CD14-positive monocyte (primary cell): ENCODE measurements at regions of chr5 and their contacts with region 1.

Region 1: DNA sequence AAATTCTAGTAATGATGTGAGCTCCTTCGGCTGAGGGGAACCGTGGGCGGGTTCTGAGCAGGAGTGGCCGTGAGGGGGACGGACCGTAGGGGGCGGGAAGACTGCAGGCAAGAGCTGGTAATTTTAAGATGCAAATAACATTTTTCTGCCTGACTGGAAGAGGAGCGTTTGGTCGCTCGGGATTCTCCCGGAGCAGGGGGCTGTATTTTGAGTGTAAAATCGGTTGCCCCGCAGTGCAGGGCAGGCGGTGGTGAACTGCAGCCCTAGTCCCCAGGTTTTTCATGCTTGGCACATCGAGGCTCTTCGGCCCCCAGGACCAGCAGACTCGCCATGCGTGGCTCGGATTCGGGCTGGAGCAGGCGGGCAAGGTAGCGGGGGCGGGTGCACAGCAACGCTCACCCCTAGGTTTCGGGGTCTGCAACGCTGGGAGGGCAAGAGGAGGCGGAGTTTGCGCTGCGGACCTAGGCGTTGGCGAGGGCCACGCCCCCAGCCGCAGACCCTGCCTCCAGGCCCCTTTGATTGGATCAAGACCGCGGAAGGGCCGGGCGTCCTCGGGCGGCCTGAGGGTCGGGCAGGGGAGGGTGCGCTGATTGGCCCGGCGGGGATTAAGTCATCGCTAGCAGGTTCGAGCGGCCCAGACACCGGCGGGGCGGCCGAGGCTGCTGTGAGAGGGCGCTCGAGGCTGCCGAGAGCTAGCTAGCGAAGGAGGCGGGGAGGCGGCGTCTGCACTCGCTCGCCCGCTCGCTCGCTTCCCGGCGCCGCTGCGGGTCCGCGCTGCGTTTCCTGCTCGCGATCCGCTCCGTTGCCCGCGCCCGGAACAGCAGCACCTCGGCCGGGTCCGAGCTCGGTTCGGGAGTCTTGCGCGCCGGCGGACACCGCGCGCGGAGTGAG is at the start of gene ARHGAP26:
- DNase-seq: peak; percentile 93 to 96 (median 93)
- H3K4me3 ChIP-seq: peak within 1 kb of the TSS; percentile 81 to 87 (median 86)
- H3K4me3 Mint-ChIP-seq: peak within 1 kb of the TSS; percentile 99 to 100
- H3K27ac ChIP-seq: peak within 1 kb of the TSS; percentile 91
- H3K27ac Mint-ChIP-seq: peak within 1 kb of the TSS; percentile 94 to 98 (median 96)
- H3K4me1 ChIP-seq: peaks cover 47 to 58% of the 10 kb centered on the region in 2 donors
- H3K4me1 Mint-ChIP-seq: peaks cover 52% of the 10 kb centered on the region
- H3K27me3 ChIP-seq: no peaks in the 10 kb centered on the region
- H3K27me3 Mint-ChIP-seq: no peaks in the 10 kb centered on the region
- CTCF ChIP-seq: no peak
- polyA plus RNA-seq, gene ARHGAP26: 26.5 to 56.8 (median 28.7) TPM

Region 2: GRCh38 chr5:142716963-142717362 is 53.0 kb before region 1 on chr5:
- intact Hi-C with region 1: loop called in 1 of 2 experiments (anchors 5 kb)
- DNase-seq: peak; percentile 32 to 47 (median 38)
- H3K4me3 ChIP-seq: no peak overlapping the region
- H3K4me3 Mint-ChIP-seq: no peak overlapping the region
- H3K27ac ChIP-seq: no peak overlapping the region
- H3K27ac Mint-ChIP-seq: no peak overlapping the region
- H3K4me1 ChIP-seq: peaks cover 6 to 17% of the 10 kb centered on the region in 2 donors
- H3K4me1 Mint-ChIP-seq: peaks cover 17% of the 10 kb centered on the region
- H3K27me3 ChIP-seq: no peaks in the 10 kb centered on the region
- H3K27me3 Mint-ChIP-seq: peaks cover 0 to 2% (median 2%) of the 10 kb centered on the region in 3 donors
- CTCF ChIP-seq: no peak

Region 3: DNA sequence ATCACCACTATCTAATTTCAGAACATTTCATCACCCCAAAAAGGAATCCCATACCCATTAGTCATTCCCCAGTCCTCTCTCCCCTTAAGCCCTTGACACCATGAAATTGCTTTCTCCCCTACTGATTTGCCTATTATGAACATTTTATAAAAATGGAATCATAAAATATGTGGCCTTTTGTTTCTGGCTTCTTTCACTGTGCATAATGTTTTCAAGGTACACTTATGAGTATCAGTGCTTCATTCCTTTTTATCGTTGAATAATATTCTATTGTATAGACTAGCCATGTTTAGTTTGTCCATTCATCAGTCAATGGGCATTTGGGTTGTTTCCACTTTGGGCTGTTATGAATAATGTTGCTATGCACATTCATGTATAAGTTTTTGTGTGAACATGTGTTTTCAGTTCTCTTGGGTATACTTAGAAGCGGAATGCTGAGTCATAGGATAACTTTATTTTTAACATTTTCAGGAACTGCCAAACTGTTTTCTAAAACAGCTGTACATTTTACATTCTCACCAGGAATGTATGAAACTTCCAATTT is 43.7 kb before region 1 on chr5:
- intact Hi-C with region 1: loop called (anchors 5 kb)
- DNase-seq: peak; percentile 67 to 86 (median 86)
- H3K4me3 ChIP-seq: peak overlapping the region in 1 of 3 experiments; percentile 35
- H3K4me3 Mint-ChIP-seq: peak overlapping the region in 1 of 2 donors; percentile 57
- H3K27ac ChIP-seq: peak overlapping the region in 1 of 2 donors; percentile 76
- H3K27ac Mint-ChIP-seq: peak overlapping the region; percentile 80 to 93 (median 89)
- H3K4me1 ChIP-seq: peaks cover 41 to 47% of the 10 kb centered on the region in 2 donors
- H3K4me1 Mint-ChIP-seq: peaks cover 44% of the 10 kb centered on the region
- H3K27me3 ChIP-seq: no peaks in the 10 kb centered on the region
- H3K27me3 Mint-ChIP-seq: peaks cover 0 to 2% (median 0%) of the 10 kb centered on the region in 3 donors
- CTCF ChIP-seq: no peak

Region 4: DNA sequence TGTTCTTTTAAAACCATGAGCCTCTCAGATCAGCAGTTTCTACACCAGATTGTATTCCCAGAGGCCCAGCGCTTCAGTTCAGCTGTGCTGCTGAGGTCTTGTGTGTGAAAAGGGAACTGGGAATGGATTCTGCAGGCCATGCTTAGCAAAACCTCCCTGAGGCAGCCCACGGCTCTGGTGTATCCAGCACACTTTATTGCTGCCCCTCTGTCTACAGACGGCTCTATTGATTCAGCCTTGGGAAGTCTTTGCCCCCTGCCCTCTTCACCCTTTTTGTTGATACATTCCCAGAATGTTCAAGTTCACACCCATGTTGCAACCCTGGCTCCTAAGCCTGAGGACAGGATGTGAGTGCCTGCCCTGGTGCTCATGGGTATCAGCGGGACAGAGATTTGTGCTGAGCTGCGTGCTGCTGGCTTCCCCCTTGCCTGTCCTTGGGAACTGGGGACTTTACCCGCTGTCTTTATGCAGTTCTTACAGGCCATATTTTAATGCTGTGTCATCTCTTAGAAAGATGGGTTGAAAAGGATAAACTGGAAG is 37.5 kb after region 1 on chr5:
- intact Hi-C with region 1: loop called in 1 of 2 experiments (anchors 5 kb)
- DNase-seq: peak; percentile 74 to 90 (median 82)
- H3K4me3 ChIP-seq: peak overlapping the region in 1 of 3 experiments; percentile 12
- H3K4me3 Mint-ChIP-seq: peak overlapping the region; percentile 12 to 68
- H3K27ac ChIP-seq: peak overlapping the region; percentile 86 to 98
- H3K27ac Mint-ChIP-seq: peak overlapping the region; percentile 95 to 100 (median 99)
- H3K4me1 ChIP-seq: peaks cover 97 to 100% of the 10 kb centered on the region in 2 donors
- H3K4me1 Mint-ChIP-seq: peaks cover 94% of the 10 kb centered on the region
- H3K27me3 ChIP-seq: no peaks in the 10 kb centered on the region
- H3K27me3 Mint-ChIP-seq: peaks cover 0 to 5% (median 0%) of the 10 kb centered on the region in 3 donors
- CTCF ChIP-seq: no peak

Region 5: GRCh38 chr5:142816531-142817430 is 46.8 kb after region 1 on chr5:
- intact Hi-C with region 1: loop called in 1 of 2 experiments (anchors 5 kb)
- DNase-seq: no peak
- H3K4me3 ChIP-seq: no peak overlapping the region
- H3K4me3 Mint-ChIP-seq: no peak overlapping the region
- H3K27ac ChIP-seq: peak overlapping the region in 1 of 2 donors; percentile 63
- H3K27ac Mint-ChIP-seq: peak overlapping the region; percentile 19 to 81 (median 59)
- H3K4me1 ChIP-seq: peaks cover 73 to 91% of the 10 kb centered on the region in 2 donors
- H3K4me1 Mint-ChIP-seq: peaks cover 79% of the 10 kb centered on the region
- H3K27me3 ChIP-seq: no peaks in the 10 kb centered on the region
- H3K27me3 Mint-ChIP-seq: peaks cover 0 to 4% (median 2%) of the 10 kb centered on the region in 3 donors
- CTCF ChIP-seq: no peak

Region 6: DNA sequence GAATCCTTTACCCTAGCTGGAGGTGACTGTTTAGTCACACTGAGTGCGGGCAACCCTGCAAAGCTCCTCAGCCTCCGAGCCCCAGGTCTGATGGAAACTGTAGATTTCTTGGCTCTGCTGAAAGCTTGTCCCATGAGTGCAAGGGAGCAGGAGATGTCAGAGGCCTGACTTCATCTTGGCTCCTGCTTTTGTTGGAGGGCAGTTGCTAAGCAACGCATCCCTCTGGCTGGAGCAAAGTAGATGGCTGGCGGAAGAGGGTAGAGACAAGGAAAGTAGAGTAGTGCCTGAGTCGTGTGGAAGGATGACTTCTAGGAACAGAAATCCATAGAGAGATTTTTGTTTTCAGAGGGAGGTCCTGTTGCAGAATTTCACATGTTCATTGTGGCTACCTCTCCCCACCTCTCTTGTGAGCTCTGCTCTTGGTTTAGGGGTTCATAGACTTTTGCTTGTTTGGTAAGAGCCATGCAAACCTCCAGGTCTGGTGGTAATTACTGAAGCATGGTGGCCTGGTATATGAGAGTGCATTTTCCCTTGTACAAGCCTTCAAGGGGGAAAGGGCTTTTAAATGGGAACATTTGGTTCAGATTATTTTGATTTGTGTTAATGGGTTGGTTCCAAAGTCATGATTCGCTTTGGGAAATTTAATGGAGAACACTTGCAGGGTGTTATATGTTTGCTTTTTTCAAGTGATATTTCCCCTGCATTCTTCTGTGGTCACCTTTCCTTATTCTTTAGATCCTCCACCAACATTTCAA is 71.7 kb after region 1 on chr5:
- intact Hi-C with region 1: loop called in 1 of 2 experiments (anchors 5 kb)
- DNase-seq: no peak
- H3K4me3 ChIP-seq: no peak overlapping the region
- H3K4me3 Mint-ChIP-seq: no peak overlapping the region
- H3K27ac ChIP-seq: no peak overlapping the region
- H3K27ac Mint-ChIP-seq: peak overlapping the region in 5 of 7 donors; percentile 6 to 76 (median 50)
- H3K4me1 ChIP-seq: peaks cover 71 to 80% of the 10 kb centered on the region in 2 donors
- H3K4me1 Mint-ChIP-seq: peaks cover 86% of the 10 kb centered on the region
- H3K27me3 ChIP-seq: no peaks in the 10 kb centered on the region
- H3K27me3 Mint-ChIP-seq: no peaks in the 10 kb centered on the region
- CTCF ChIP-seq: no peak